OCI-LY7 (cell line): ENCODE measurements at regions of chr6 and their contacts with region 1.

Region 1: GRCh38 chr6:144359783-144360182 is 74.6 kb downstream of the UTRN start:
- DNase-seq: no peak
- H3K4me3 ChIP-seq: no peak overlapping the region
- H3K27ac ChIP-seq: no peak overlapping the region
- H3K4me1 ChIP-seq: no peaks in the 10 kb centered on the region
- CTCF ChIP-seq: no peak

Region 2: GRCh38 chr6:144379356-144379755 is 19.6 kb after region 1 on chr6:
- CTCF ChIA-PET with region 1: no interaction called
- POLR2A ChIA-PET with region 1: interaction called, 12 read pairs
- intact Hi-C with region 1: no loop called
- DNase-seq: no peak
- H3K4me3 ChIP-seq: no peak overlapping the region
- H3K27ac ChIP-seq: no peak overlapping the region
- H3K4me1 ChIP-seq: no peaks in the 10 kb centered on the region
- CTCF ChIP-seq: no peak